Heart right ventricle (tissue), 16 donors: ENCODE measurements at regions of chr18 and their contacts with region 1.

Region 1: DNA sequence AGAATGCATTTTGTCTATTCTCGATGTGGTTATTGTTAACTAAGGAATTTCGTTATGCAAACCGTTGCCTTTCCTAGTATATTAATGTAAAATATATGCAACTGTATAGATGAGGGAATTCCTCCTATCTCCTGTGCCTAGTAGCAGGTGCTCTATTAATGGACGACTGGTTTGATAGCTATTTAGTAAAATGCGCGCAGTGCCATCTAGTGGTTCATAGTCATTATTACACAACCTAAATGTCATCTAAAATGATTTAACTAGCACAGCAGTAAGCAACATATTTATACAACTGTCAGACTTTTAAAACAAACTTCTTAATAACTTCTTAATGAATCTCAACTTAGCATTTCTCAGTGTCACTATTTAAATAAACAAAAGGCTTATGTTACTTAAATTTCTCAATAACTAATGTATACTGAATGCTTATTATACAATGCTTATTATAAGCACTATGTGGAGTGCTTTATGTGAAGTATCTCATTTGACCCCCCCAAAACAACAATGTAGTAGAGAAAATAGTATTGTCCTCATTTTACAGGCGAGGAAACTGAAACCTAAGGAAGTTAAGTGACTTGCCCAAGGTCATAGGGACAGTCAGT is 77.9 kb downstream of the DTNA start:
- DNase-seq: peak in 1 of 2 donors; percentile 40
- ATAC-seq: peak in 5 of 8 donors; percentile 66 to 74 (median 70)
- H3K4me3 ChIP-seq: no peak overlapping the region
- H3K27ac ChIP-seq: no peak overlapping the region
- H3K4me1 ChIP-seq: peaks cover 0 to 5% (median 0%) of the 10 kb centered on the region in 9 donors
- H3K27me3 ChIP-seq: no peaks in the 10 kb centered on the region
- CTCF ChIP-seq: peak; percentile 68 to 84 (median 77)

Region 2: DNA sequence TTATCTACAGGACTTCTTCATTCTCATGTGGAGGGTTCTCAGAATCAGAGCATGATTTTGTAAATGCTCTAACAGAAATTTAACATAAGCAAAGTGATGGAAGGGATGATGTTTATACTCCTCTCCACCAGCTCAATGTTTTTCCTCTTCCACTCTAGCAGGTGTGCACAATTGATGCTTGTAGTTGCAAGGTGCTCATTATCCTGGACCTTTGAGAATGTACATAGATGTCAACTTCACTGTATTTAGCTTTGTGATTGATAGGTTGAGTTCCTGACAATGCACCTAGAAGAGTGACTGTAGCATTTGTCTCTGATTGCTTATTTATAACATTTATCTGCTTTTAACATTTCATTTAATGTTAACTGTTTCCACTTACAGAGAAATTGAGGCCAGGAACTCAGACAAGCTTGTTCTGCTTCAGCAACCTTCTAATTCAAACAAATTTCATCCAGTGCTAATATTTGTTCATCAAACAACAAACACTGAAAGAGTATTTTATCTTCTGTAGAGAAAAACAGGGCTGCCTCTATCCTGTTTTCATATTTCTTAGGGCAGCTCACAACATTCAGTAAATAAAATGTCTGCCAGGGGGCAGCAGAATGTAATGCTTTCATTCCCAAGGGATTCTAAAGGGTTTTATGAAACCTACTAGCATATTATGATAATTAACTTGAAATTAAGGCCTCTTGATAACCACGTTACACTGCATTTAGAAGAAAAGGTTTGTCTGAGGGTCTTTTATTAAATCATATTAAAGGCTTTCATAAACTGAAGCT is 435.5 kb before region 1 on chr18:
- intact Hi-C with region 1: loop called in 8 of 10 experiments (anchors 5 to 10 kb)
- DNase-seq: no peak
- ATAC-seq: no peak
- H3K4me3 ChIP-seq: no peak overlapping the region
- H3K27ac ChIP-seq: no peak overlapping the region
- H3K4me1 ChIP-seq: no peaks in the 10 kb centered on the region
- H3K27me3 ChIP-seq: no peaks in the 10 kb centered on the region
- CTCF ChIP-seq: peak in 8 of 9 donors; percentile 7 to 59 (median 44)

Region 3: DNA sequence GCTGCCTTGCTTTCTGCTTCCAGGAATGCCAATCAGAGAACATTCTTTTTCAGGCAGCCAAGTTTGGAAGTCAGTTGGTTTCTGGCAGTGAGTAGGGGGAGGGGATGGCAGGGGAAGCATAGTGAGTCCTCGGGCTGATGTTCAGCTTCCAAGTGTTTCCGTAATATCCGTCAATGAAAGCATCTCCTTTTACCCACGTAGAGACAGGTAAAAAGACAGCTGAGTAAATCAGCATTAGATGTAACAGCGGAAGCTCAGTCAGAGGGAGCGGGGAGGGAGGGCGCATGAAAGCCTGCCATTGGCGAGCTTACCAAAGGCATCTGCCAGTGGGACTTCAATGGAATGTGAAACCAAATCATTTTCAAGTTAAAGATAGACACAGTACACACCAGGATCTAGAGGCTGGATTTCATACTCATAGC is 195.1 kb before region 1 on chr18:
- intact Hi-C with region 1: loop called in 3 of 10 experiments (anchors 5 to 10 kb)
- DNase-seq: peak; percentile 48 to 58
- ATAC-seq: peak; percentile 80 to 94 (median 92)
- H3K4me3 ChIP-seq: peak overlapping the region in 9 of 10 donors; percentile 29 to 54 (median 48)
- H3K27ac ChIP-seq: peak overlapping the region; percentile 11 to 87 (median 74)
- H3K4me1 ChIP-seq: peaks cover 0 to 42% (median 3%) of the 10 kb centered on the region in 9 donors
- H3K27me3 ChIP-seq: no peaks in the 10 kb centered on the region
- CTCF ChIP-seq: no peak

Region 4: DNA sequence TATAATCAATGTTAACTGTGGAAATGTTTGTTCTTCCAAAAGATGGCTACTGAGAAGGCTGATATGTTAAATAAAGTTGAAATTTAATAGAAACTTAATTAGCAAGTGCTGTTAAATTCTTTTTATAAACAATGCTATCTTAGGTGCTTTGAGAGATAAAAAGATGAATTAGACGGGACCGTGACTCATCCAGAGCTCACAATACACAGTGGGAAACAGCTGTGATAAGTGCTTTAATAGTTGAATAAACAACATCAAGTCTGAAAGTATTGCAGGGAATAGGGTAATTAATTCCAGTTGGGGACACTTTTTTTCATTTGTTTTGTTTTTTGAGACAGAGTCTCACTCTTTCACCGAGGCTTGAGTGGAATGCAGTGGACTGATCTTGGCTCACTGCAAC is 163.5 kb before region 1 on chr18:
- intact Hi-C with region 1: no loop called
- DNase-seq: no peak
- ATAC-seq: no peak
- H3K4me3 ChIP-seq: no peak overlapping the region
- H3K27ac ChIP-seq: no peak overlapping the region
- H3K4me1 ChIP-seq: peaks cover 0 to 18% (median 3%) of the 10 kb centered on the region in 9 donors
- H3K27me3 ChIP-seq: no peaks in the 10 kb centered on the region
- CTCF ChIP-seq: no peak

Region 5: DNA sequence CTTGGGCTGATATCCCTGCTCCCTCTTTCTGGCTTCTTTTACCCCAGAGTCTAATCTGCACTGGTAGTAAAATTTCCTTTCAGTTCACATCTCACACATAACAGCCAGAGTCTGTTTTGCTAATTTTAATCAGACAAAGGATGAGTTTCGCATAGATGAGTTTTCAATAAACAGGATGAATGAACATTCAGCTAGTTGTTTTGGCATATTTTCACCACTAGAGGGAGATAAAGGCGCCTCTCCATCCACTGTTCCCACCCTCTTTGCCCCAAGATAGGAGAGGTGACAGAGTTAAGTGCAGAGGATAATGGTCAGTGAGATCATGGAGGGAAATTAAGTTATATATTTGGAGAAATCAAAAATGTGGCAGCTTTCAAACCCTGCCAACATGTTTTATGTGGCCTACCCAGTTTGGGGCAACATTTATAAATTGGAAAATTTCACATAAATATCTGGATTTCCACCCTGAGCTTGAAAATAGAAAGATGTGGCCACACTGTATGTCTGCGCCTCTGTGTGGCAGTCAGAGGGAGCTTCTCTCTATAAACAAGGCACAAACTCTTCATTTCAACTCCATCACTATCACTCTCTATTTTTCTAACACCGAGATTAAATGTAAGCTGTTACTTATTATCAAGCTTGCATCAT is 126.4 kb before region 1 on chr18:
- intact Hi-C with region 1: loop called in 8 of 10 experiments (anchors 1 to 10 kb)
- DNase-seq: no peak
- ATAC-seq: peak in 7 of 8 donors; percentile 41 to 66 (median 55)
- H3K4me3 ChIP-seq: no peak overlapping the region
- H3K27ac ChIP-seq: peak overlapping the region in 5 of 10 donors; percentile 86 to 92 (median 87)
- H3K4me1 ChIP-seq: peaks cover 2 to 49% (median 28%) of the 10 kb centered on the region in 9 donors
- H3K27me3 ChIP-seq: no peaks in the 10 kb centered on the region
- CTCF ChIP-seq: peak; percentile 68 to 82 (median 77)

Region 6: DNA sequence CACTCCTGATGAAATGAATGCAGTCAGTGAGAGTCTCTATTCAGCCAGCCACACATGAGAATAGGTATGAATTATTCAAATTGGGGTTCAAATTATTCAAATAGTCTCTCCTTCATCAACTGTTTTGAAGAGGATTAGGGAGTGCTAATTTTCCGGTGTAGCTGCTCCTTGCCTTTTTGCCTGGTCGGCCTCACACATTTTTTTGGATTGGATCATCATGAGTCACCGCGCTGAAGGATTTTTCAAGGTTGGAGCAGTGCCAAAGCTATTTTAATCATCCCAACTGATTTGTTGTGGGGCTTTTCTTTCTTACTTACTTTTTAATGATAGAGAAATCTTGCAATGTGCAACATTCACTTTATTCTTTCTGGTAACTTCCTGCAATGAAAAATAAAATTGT is 80.4 kb before region 1 on chr18:
- intact Hi-C with region 1: loop called in 1 of 10 experiments (anchors 10 kb)
- DNase-seq: peak in 1 of 2 donors; percentile 82
- ATAC-seq: peak in 7 of 8 donors; percentile 57 to 71 (median 68)
- H3K4me3 ChIP-seq: peak overlapping the region in 2 of 10 donors; percentile 0 to 8
- H3K27ac ChIP-seq: peak overlapping the region; percentile 14 to 81 (median 66)
- H3K4me1 ChIP-seq: peaks cover 6 to 58% (median 35%) of the 10 kb centered on the region in 9 donors
- H3K27me3 ChIP-seq: no peaks in the 10 kb centered on the region
- CTCF ChIP-seq: no peak